ENCODE measurements at regions of chr12 and their contacts with region 1.

Region 1: DNA sequence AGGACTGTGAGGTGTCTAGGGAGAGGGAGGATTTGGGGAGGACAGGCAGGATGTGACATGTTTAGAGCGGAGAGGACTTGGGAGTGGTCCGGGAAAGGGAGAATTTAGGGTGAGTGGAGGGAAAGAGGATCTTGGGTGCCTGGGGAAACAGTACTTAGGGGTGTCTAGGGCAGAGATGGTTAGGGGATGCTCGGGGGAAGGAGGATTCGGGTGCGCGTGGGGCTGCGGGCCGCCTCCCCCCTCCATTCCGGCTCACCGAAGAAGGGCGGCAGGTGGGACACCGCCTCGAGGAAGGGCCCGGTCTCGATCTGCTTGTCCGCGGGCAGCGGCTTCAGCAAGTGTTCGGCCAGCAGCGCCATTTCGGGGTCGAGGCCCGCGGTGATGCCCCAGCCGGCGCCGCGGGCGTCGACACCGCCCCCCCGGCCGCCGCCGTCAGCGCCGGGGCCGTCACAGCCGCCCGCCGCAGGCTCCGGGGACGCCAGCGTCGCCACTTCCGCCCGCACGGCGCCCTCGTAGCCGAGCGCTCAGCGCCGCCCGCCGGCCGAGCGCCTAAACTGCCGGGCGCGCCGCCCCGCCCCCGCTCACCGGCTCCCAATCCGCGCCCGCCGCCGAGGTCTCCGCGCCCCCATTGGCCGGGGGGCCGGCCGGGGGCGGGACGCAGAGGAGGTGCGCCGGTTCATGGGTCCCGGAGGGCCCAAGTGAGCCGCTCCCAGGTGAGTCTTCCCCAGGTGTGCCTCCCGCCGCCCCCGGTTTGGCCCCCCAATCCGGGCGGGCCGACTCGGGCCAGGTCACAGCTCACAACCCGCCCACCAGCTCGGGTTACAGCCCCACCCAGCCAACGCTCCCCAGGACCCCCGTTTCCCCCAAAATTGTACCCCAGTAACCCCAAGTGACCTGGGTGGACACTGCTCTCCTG is at the start of gene GLTP:
- DNase-seq: peak; percentile 97
- ATAC-seq: peak; percentile 94
- H3K4me3 ChIP-seq: peak within 1 kb of the TSS; percentile 84
- H3K27ac ChIP-seq: peak within 1 kb of the TSS; percentile 55
- H3K4me1 ChIP-seq: peaks cover 44% of the 10 kb centered on the region
- H3K27me3 ChIP-seq: no peaks in the 10 kb centered on the region
- CTCF ChIP-seq: peak; percentile 33; the same call in 1 of the 2 replicates
- total RNA-seq, gene GLTP: 78.2 and 82.6 TPM in 2 replicates

Region 2: GRCh38 chr12:109804820-109805761 is 75.2 kb before region 1 on chr12:
- CTCF ChIA-PET with region 1: no interaction called
- POLR2A ChIA-PET with region 1: no interaction called
- intact Hi-C with region 1: loop called (anchors 1 kb)
- DNase-seq: peak; percentile 86
- ATAC-seq: peak; percentile 95
- H3K4me3 ChIP-seq: no peak overlapping the region
- H3K27ac ChIP-seq: no peak overlapping the region
- H3K4me1 ChIP-seq: no peaks in the 10 kb centered on the region
- H3K27me3 ChIP-seq: no peaks in the 10 kb centered on the region
- CTCF ChIP-seq: peak; percentile 99

Region 3: DNA sequence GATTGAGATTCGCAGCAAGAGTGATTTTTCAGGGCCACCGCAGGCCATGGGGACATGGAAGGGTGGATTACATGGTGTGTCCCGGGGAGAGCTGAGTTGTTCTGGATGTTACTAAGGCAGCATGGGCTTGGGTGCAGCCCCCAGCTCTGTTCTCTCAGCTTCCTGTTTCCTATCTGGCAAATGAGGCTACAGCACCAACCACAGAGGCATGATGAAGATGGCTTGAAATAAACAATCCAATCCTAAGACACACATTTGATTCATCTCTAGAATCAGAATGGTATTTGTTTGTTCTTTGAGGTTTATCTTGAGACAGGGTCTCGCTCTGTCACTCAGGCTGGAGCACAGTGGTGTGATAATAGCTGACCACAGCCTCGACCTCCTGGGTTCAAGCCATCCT is 21.5 kb before region 1 on chr12:
- CTCF ChIA-PET with region 1: interaction called, 5 read pairs
- POLR2A ChIA-PET with region 1: no interaction called
- intact Hi-C with region 1: loop called (anchors 1 kb)
- DNase-seq: no peak
- ATAC-seq: no peak
- H3K4me3 ChIP-seq: no peak overlapping the region
- H3K27ac ChIP-seq: no peak overlapping the region
- H3K4me1 ChIP-seq: no peaks in the 10 kb centered on the region
- H3K27me3 ChIP-seq: no peaks in the 10 kb centered on the region
- CTCF ChIP-seq: no peak

Region 4: GRCh38 chr12:109899783-109900751 is 19.8 kb after region 1 on chr12 and contains the start of gene TCHP:
- CTCF ChIA-PET with region 1: interaction called, 6 read pairs
- POLR2A ChIA-PET with region 1: no interaction called
- intact Hi-C with region 1: loop called (anchors 2 kb)
- DNase-seq: peak; percentile 90
- ATAC-seq: peak; percentile 88
- H3K4me3 ChIP-seq: peak within 1 kb of the TSS; percentile 74
- H3K27ac ChIP-seq: peak within 1 kb of the TSS; percentile 49
- H3K4me1 ChIP-seq: peaks cover 11% of the 10 kb centered on the region
- H3K27me3 ChIP-seq: no peaks in the 10 kb centered on the region
- CTCF ChIP-seq: peak; percentile 56; the same call in 1 of the 2 replicates
- total RNA-seq, gene TCHP: 21.6 and 42.8 TPM in 2 replicates

Region 5: DNA sequence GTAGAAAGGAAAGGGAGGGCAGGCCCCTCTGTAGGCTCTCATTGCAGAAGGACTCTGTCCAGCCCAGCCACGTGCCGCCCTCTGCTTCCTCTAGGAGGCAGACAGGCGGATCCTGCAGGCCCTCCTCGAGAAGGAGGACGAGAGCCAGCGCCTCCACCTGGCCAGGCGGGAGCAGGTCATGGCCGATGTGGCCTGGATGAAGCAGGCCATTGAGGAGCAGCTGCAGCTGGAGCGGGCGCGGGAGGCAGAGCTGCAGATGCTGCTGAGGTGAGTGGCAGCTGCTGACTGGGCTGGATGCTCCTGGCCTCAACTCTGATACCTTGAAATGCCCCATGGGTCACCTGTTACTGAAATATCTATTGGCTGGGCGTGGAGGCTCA is 30.7 kb after region 1 on chr12:
- CTCF ChIA-PET with region 1: interaction called, 11 read pairs
- POLR2A ChIA-PET with region 1: no interaction called
- intact Hi-C with region 1: no loop called
- DNase-seq: peak; percentile 64
- ATAC-seq: peak; percentile 82
- H3K4me3 ChIP-seq: no peak overlapping the region
- H3K27ac ChIP-seq: no peak overlapping the region
- H3K4me1 ChIP-seq: no peaks in the 10 kb centered on the region
- H3K27me3 ChIP-seq: no peaks in the 10 kb centered on the region
- CTCF ChIP-seq: peak; percentile 84

Measured in PC-3 (cell line).